ENCODE measurements at regions of chr6 and their contacts with region 1.

Region 1: GRCh38 chr6:32118782-32119628 is 9.0 kb downstream of the ATF6B start:
- DNase-seq: peak; percentile 82 to 99 (median 92)

Region 2: GRCh38 chr6:32153564-32154513 is 34.8 kb after region 1 on chr6 and contains the start of gene PPT2:
- intact Hi-C with region 1: loop called (anchors 5 kb)
- DNase-seq: peak; percentile 81 to 98 (median 90)

Measured in posterior cingulate gyrus (tissue), 11 donors.